ENCODE measurements at regions of chr10 and their contacts with region 1.

Region 1: DNA sequence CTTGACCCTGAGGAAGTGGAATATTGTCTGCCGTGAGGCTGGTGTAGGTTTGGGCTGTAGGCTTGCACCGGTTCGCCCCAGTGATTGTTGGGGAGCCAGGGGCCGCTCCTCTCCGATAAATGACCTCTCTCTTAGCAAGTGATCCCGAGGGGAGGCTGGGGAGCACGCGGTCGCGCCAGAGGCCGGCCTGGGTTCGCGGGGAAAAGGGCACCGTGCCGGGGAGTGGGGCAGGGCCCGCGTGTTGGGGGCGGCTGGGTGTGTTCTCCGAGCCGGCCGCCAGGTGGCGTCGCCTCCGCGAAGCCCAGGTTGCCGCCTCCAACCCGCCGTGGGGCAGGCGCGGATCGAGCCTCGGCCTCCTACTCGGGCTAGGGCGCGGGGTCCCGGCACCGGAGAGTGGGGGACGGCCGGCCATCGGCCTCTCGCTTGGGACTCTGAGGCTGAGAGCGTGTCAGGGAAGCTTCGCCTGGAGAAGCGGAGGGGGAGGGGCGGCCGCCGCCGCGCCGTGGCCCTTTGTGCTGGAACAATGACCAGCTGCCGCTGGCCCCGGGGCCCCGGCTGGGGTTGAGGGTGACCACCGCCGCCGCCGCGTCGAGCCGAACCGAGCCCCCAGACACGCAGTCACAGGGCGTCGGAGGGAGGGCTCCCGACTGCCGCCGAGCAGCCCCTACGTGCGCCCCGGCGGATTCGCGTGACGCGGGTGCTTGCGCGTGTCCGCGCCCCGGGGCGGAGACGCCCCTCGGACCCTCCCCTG is 442 bp upstream of the LZTS2 start:
- DNase-seq: peak; percentile 45
- ATAC-seq: peak; percentile 35
- H3K4me3 ChIP-seq: peak overlapping the region; percentile 71 to 99 (median 91)
- H3K27ac ChIP-seq: peak overlapping the region; percentile 89
- H3K4me1 ChIP-seq: peaks cover 32% of the 10 kb centered on the region
- H3K27me3 ChIP-seq: no peaks in the 10 kb centered on the region; a peak in 1 of 5 replicates
- CTCF ChIP-seq: peak; percentile 87
- EP300 ChIP-seq: no peak
- POLR2A ChIP-seq: peak in 1 of 2 experiments; percentile 64; a peak in 2 of 4 replicates
- RAD21 ChIP-seq: peak; percentile 90

Region 2: DNA sequence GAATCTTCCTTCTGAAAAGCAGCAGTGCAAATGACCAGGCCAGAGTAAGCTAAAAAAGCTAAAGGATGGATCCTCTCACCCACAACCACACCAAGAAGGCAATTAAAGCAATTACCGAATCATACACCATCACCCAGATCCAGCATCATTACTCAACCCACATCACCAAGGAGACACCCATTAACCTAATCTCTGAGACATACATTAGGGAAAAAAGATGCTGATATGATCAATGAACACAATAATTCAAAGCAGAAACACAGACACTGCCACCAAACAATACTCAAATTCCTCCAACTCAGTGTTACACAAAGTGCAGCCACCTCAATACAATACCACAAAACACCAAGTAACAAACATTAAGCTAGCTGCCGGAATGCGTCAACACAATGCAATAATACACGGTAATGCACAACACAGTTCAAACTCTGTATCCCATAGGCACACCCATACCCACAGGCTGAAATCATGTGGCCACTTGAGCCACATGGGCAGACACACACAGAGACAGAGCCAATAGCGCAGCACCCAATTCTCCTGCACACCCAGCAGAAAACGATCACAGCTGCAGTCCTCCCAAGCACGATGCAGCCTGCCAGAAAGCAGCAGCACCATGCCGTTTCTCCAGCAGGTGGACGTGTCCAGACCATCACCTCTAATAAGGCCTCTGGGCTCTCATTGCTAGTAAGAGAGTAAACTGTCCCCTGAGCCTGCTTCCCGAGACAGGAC is 232.3 kb before region 1 on chr10:
- CTCF ChIA-PET with region 1: no interaction called
- POLR2A ChIA-PET with region 1: no interaction called
- in situ Hi-C with region 1: no loop called
- intact Hi-C with region 1: no loop called
- DNase-seq: peak; percentile 13
- ATAC-seq: peak; percentile 93
- H3K4me3 ChIP-seq: no peak overlapping the region
- H3K27ac ChIP-seq: no peak overlapping the region
- H3K4me1 ChIP-seq: no peaks in the 10 kb centered on the region
- H3K27me3 ChIP-seq: peaks cover 1 to 13% of the 10 kb centered on the region in 2 experiments; a peak in 3 of 5 replicates
- CTCF ChIP-seq: 0 out of 2 replicates have a peak, but pooled peaks have one; percentile 23
- EP300 ChIP-seq: no peak
- POLR2A ChIP-seq: no peak
- RAD21 ChIP-seq: peak; percentile 16; the same call in 1 of the 2 replicates

Region 3: DNA sequence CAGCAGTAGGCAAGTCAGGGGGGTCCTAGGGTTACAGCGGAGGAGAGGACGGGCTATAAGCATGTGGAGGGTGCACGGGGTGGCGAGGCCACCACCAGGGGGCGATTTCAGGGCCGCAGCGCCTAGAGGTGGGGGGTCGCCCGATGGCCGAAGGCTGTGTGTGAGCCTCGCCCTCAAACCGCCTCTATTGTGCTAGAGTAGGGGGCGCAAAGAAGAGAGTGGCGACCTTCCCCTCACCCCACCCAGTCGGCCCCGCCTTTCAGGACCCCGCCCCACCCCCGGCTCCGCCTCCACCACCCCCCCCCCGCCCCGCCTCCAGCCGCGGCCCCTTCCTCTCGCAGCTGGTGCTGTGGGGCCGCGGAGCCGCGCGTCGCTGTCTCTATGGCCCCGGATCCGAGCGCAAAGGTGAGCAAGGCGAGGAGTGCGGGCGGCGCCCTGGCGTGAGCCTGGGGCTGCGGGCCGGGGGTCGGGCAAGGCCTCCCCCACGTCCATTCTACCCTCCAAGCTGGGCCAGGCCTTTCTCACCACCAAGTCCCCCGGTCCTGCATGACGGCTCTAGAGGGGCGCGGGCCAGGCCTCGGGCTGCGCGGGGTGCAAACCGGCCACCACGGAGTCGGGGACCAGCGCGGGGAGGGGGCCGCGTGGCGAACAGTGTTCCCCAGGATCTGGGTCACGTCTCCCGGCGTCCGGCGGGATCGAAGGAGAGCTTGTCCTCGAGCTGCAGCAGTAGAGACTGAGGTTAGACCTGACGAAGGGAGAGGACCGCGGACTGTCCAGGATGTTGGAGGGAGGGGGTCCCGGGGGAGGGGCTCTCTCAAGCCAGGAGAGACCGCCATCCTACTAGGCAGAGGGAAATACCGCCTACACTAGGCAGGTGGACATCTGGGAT is 29.7 kb before region 1 on chr10 and contains the start of gene SEMA4G:
- CTCF ChIA-PET with region 1: interaction called, 4 read pairs
- POLR2A ChIA-PET with region 1: interaction called, 277 read pairs
- in situ Hi-C with region 1: no loop called
- intact Hi-C with region 1: no loop called
- DNase-seq: peak; percentile 80
- ATAC-seq: peak; percentile 69
- H3K4me3 ChIP-seq: peak within 1 kb of the TSS; percentile 84 to 96 (median 94)
- H3K27ac ChIP-seq: peak within 1 kb of the TSS; percentile 96
- H3K4me1 ChIP-seq: peaks cover 88% of the 10 kb centered on the region
- H3K27me3 ChIP-seq: no peaks in the 10 kb centered on the region; a peak in 1 of 5 replicates
- CTCF ChIP-seq: peak; percentile 87
- EP300 ChIP-seq: 0 out of 4 replicates have a peak, but pooled peaks of 1 of the 2 experiments have one; percentile 23
- POLR2A ChIP-seq: peak; percentile 52 to 61; a peak in 3 of 4 replicates
- RAD21 ChIP-seq: peak; percentile 70
- total RNA-seq, gene SEMA4G: 42.9 and 46.2 TPM in 2 replicates

Region 4: DNA sequence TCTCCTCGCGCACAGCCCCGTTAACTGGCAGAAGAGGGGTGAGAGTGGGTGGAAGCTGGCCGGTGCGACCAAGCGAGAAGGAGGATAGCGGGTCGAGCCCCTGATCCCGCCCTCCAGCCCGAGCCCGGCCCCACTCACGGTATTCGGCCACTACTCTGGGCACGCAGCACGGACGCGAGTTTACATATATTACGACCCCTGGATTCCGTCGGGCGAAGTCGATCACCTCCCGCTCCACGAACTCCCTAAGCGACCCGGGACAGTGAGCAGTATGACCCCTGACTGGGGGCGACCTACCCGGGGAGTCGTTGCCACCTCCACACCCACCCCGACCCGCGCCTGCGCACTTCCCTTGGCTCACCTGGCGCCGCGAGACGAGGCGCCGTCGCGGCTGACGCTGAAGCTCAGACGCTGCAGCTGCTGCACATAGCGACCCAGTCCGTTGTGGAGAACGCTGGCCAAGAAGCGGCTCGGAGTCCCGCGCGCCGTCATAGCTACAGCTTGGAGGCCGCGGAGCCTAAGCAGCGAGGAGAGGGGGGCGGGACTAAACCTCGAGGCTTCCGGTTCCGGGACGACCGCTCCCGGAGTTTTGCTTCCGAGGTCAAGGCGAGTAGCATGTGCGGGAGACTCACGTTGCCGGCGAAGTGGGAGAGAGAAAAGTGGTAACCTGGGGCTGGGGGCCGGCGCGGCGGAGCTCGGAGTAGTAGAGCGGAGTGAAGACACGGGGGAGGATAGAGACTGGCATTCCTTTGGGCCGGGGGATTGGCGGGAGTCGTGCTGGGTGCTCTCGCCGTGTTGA is 12.0 kb before region 1 on chr10 and contains the starts of genes MRPL43 and TWNK:
- CTCF ChIA-PET with region 1: no interaction called
- POLR2A ChIA-PET with region 1: interaction called, 54 read pairs
- in situ Hi-C with region 1: no loop called
- intact Hi-C with region 1: no loop called
- DNase-seq: peak; percentile 72
- ATAC-seq: peak; percentile 73
- H3K4me3 ChIP-seq: peak within 1 kb of the TSS; percentile 77 to 96 (median 91)
- H3K27ac ChIP-seq: peak within 1 kb of the TSS; percentile 83
- H3K4me1 ChIP-seq: peaks cover 53% of the 10 kb centered on the region
- H3K27me3 ChIP-seq: no peaks in the 10 kb centered on the region; a peak in 1 of 5 replicates
- CTCF ChIP-seq: peak; percentile 15; the same call in 1 of the 2 replicates
- EP300 ChIP-seq: no peak
- POLR2A ChIP-seq: peak; percentile 55 to 67; a peak in 3 of 4 replicates
- RAD21 ChIP-seq: no peak
- total RNA-seq, gene MRPL43: 68.8 and 71.0 TPM in 2 replicates
- total RNA-seq, gene TWNK: 16.5 and 21.9 TPM in 2 replicates

Region 5: GRCh38 chr10:101012525-101013364 is 13.6 kb after region 1 on chr10:
- CTCF ChIA-PET with region 1: interaction called, 240 read pairs
- POLR2A ChIA-PET with region 1: interaction called, 124 read pairs
- in situ Hi-C with region 1: no loop called
- intact Hi-C with region 1: loop called (anchors 1 kb)
- DNase-seq: peak; percentile 89
- ATAC-seq: peak; percentile 73
- H3K4me3 ChIP-seq: peak overlapping the region in 1 of 3 experiments; percentile 77; a peak in 2 of 6 replicates
- H3K27ac ChIP-seq: no peak overlapping the region
- H3K4me1 ChIP-seq: peaks cover 75% of the 10 kb centered on the region
- H3K27me3 ChIP-seq: no peaks in the 10 kb centered on the region
- CTCF ChIP-seq: peak; percentile 93
- EP300 ChIP-seq: no peak; a peak in 1 of 4 replicates
- POLR2A ChIP-seq: no peak
- RAD21 ChIP-seq: peak; percentile 77

Region 6: GRCh38 chr10:101018600-101019439 is 19.7 kb after region 1 on chr10:
- CTCF ChIA-PET with region 1: interaction called, 240 read pairs
- POLR2A ChIA-PET with region 1: interaction called, 56 read pairs
- in situ Hi-C with region 1: no loop called
- intact Hi-C with region 1: no loop called
- DNase-seq: peak; percentile 72
- ATAC-seq: peak; percentile 91
- H3K4me3 ChIP-seq: peak overlapping the region; percentile 25 to 69 (median 55); a peak in 5 of 6 replicates
- H3K27ac ChIP-seq: no peak overlapping the region
- H3K4me1 ChIP-seq: peaks cover 34% of the 10 kb centered on the region
- H3K27me3 ChIP-seq: peaks cover 1 to 13% of the 10 kb centered on the region in 2 experiments; a peak in 2 of 5 replicates
- CTCF ChIP-seq: peak; percentile 100
- EP300 ChIP-seq: no peak
- POLR2A ChIP-seq: no peak
- RAD21 ChIP-seq: peak; percentile 85

Region 7: GRCh38 chr10:101031128-101031795 is 32.1 kb after region 1 on chr10 and contains the starts of genes PDZD7 and SFXN3:
- CTCF ChIA-PET with region 1: no interaction called
- POLR2A ChIA-PET with region 1: interaction called, 18 read pairs
- in situ Hi-C with region 1: no loop called
- intact Hi-C with region 1: no loop called
- DNase-seq: peak; percentile 79
- ATAC-seq: peak; percentile 90
- H3K4me3 ChIP-seq: peak within 1 kb of the TSS; percentile 73 to 80 (median 74)
- H3K27ac ChIP-seq: peak within 1 kb of the TSS; percentile 65
- H3K4me1 ChIP-seq: peaks cover 66% of the 10 kb centered on the region
- H3K27me3 ChIP-seq: no peaks in the 10 kb centered on the region; a peak in 1 of 5 replicates
- CTCF ChIP-seq: no peak
- EP300 ChIP-seq: no peak
- POLR2A ChIP-seq: no peak
- RAD21 ChIP-seq: no peak
- total RNA-seq, gene PDZD7: 0.60 and 0.73 TPM in 2 replicates
- total RNA-seq, gene SFXN3: 11.9 and 16.8 TPM in 2 replicates

Measured in HepG2 (cell line).